ENCODE measurements at regions of chr9 and their contacts with region 1.

Region 1: DNA sequence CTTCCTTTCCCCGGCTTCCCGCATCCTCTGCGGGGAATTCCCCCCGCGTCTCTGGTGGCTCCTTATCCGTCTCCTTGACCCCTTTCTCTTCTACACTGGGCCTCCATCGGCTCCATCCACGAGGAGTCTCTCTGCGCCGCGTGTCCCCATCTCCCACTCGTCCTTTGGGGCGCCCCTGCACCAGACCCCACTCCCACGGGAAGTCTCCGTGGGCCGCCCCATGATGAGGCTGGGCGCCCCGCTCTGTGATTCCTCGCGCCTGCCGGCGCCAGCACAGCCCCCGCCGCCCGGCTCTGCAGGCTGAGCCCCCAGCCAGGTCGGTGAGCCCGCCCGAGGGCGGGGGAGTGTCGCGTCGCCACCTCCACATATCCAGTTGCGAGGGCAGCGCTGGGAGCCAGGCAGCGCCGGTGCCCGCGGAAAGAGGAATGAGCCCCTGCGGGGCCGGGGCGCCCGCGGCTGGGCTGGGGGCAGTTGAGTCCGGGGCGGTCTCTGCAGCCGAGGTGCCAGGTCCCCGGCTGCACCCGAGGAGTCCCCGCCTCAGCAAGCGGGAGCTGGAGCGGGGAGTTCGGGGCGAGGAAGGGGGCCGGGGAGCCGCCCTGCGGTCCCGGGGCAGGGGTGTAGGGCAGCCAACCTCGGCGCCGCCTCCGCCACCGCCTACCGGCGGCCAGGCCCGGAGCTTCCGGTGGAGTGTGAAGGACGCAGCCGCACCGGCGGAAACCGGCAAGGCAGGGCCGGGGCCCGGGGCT is 2.1 kb upstream of the TRAF1 start:
- DNase-seq: peak in 1 of 2 experiments; percentile 85
- H3K4me3 ChIP-seq: peak overlapping the region; percentile 51 to 81 (median 64)
- H3K27ac ChIP-seq: peak overlapping the region; percentile 42; the same call in 1 of the 2 replicates
- H3K4me1 ChIP-seq: peaks cover 0 to 23% (median 13%) of the 10 kb centered on the region in 4 experiments; a peak in 6 of 7 replicates
- H3K27me3 ChIP-seq: peaks cover 0 to 6% (median 2%) of the 10 kb centered on the region in 4 experiments; a peak in 1 of 7 replicates
- CTCF ChIP-seq: no peak
- EP300 ChIP-seq: no peak
- POLR2A ChIP-seq: no peak
- RAD21 ChIP-seq: no peak; a peak in 1 of 4 replicates

Region 2: GRCh38 chr9:120916588-120916987 is 12.1 kb before region 1 on chr9:
- CTCF ChIA-PET with region 1: interaction called, 16 read pairs
- POLR2A ChIA-PET with region 1: interaction called, 7 read pairs
- DNase-seq: no peak
- H3K4me3 ChIP-seq: no peak overlapping the region
- H3K27ac ChIP-seq: no peak overlapping the region
- H3K4me1 ChIP-seq: peaks cover 0 to 6% (median 3%) of the 10 kb centered on the region in 4 experiments; a peak in 4 of 7 replicates
- H3K27me3 ChIP-seq: no peaks in the 10 kb centered on the region; a peak in 1 of 7 replicates
- CTCF ChIP-seq: peak; percentile 19 to 36 (median 30)
- EP300 ChIP-seq: no peak
- POLR2A ChIP-seq: no peak
- RAD21 ChIP-seq: peak; percentile 28 to 53; a peak in 3 of 4 replicates

Region 3: DNA sequence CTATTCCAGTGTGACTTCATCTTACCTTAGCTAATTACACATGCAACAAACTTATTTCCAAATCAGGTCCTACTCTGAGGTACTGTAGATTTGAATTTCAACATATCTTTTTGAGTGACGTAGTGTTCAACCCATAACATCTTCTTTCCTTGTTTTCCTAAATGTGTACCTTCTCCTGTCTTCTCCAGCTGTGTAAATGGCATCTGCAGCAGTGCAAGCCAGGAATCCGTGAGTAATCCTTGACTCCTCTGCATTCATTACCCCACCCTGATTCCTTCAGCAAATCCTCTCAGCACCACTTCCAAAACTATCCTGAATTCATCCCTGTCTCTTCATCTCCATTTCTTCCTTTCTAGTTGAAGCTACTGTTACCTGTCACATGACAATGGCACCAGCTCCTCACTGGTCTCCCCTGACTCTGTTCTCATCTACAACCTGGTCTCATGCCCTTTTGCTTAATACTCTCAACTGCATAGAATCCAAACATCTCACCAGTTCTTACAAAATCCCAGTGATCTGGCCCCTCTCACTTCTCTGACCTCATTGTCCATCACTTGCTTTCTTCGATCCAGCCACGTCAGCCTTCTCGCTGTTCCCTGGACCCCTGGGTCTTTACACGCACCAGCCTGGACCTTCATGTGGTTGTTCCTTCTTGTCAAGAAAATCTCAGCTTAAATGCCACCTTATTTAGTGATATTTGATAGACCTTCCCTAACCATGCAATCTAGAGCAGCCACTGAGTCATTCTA is 12.5 kb after region 1 on chr9:
- CTCF ChIA-PET with region 1: interaction called, 11 read pairs
- POLR2A ChIA-PET with region 1: interaction called, 14 read pairs
- DNase-seq: no peak
- H3K4me3 ChIP-seq: no peak overlapping the region
- H3K27ac ChIP-seq: no peak overlapping the region
- H3K4me1 ChIP-seq: peaks cover 0 to 14% (median 7%) of the 10 kb centered on the region in 4 experiments; a peak in 6 of 7 replicates
- H3K27me3 ChIP-seq: no peaks in the 10 kb centered on the region
- CTCF ChIP-seq: no peak
- EP300 ChIP-seq: no peak
- POLR2A ChIP-seq: no peak
- RAD21 ChIP-seq: no peak